ENCODE measurements at regions of chr17 and their contacts with region 1.

Region 1: GRCh38 chr17:3668279-3669085 is at the starts of genes EMC6 and TAX1BP3:
- DNase-seq: peak; percentile 97 to 100 (median 99)
- H3K4me3 ChIP-seq: peak within 1 kb of the TSS; percentile 76 to 83
- H3K4me3 Mint-ChIP-seq: peak within 1 kb of the TSS; percentile 88 to 96 (median 92)
- H3K27ac ChIP-seq: peak within 1 kb of the TSS; percentile 80
- H3K27ac Mint-ChIP-seq: peak within 1 kb of the TSS; percentile 84 to 95 (median 90)
- H3K4me1 ChIP-seq: peaks cover 23% of the 10 kb centered on the region
- H3K4me1 Mint-ChIP-seq: peaks cover 18 to 30% (median 19%) of the 10 kb centered on the region in 4 donors
- H3K27me3 ChIP-seq: no peaks in the 10 kb centered on the region
- H3K27me3 Mint-ChIP-seq: no peaks in the 10 kb centered on the region
- total RNA-seq, gene EMC6: 27.8 to 29.4 TPM
- total RNA-seq, gene TAX1BP3: 12.7 to 13.2 TPM

Region 2: DNA sequence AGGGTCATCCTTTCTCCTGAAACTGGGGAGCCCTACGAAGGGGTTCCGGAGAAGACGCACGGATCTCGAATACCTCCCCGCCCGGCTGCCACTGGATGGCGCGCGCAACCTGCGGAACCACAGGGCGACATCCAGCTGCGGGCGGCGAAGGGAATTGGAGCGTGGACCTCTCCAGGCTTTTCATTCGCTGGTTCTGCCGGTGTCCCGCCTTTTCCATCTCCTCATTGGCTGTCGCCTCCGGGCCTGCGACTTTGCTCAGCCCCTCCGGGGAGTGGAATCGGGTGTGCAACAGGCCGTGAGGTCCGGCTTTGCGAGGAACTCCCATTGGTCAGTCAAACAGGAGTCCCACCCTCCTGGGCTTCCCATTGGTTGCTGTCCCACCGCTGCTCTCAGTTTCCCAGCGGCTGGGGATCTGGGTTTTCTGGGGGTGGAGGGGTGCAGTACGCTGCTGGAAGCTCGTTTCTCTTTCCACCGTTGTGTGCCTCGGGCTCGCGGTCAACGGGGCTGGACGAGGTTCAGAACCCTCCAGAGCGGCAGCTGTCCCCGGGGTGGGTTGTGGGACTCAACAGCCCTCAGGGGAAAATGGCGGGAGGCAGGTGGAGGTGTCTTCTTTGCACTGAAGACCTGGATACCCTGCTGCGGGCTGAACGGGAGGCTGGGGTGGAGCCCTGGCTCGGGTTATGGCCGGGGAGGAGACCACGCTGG is 619.6 kb before region 1 on chr17:
- CTCF ChIA-PET with region 1: no interaction called
- POLR2A ChIA-PET with region 1: no interaction called
- intact Hi-C with region 1: loop called (anchors 5 kb)
- DNase-seq: peak; percentile 88 to 95 (median 93)
- H3K4me3 ChIP-seq: peak overlapping the region; percentile 66 to 94
- H3K4me3 Mint-ChIP-seq: peak overlapping the region; percentile 89 to 96 (median 94)
- H3K27ac ChIP-seq: peak overlapping the region; percentile 48
- H3K27ac Mint-ChIP-seq: peak overlapping the region; percentile 76 to 93 (median 91)
- H3K4me1 ChIP-seq: peaks cover 15% of the 10 kb centered on the region
- H3K4me1 Mint-ChIP-seq: peaks cover 0 to 14% (median 6%) of the 10 kb centered on the region in 4 donors
- H3K27me3 ChIP-seq: no peaks in the 10 kb centered on the region
- H3K27me3 Mint-ChIP-seq: no peaks in the 10 kb centered on the region

Region 3: DNA sequence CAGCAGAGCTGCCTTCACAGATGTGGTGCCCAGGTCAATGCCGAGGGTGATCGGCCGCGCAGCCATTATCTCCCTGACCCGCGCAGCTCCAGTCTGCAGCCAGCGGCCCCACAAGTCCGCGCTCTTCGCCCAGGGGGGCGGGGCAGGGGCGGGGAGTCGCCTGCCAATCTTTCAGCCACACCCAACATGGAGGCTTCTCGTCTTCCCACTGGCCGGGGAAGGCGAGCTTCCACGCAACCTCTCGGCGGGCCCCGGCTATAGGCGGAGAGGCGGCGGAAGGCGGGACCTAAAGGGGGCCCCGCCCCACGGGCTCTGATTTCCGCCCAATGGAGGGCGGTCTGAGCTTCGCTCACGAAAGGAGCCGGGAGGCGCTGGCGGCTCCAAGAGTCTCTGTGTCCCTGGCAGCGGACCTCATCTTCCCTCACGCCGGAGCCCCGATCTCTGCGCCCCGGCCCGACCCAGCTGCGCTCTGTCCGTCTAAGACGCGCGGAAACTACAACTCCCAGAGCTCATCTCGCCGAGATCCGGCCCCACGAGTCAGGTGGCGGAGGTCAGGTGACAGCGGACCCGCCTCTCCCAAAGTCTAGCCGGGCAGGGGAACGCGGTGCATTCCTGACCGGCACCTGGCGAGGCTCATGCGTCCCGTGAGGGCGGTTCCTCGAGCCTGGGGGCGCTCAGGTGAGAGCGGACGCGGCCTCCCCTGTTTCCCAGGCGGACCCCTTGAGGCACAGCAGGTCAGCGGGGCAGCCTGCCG is 32.2 kb before region 1 on chr17 and contains the starts of genes CTNS and SHPK:
- CTCF ChIA-PET with region 1: no interaction called
- POLR2A ChIA-PET with region 1: interaction called, 5 read pairs
- intact Hi-C with region 1: loop called (anchors 1 kb)
- DNase-seq: peak; percentile 93 to 97 (median 94)
- H3K4me3 ChIP-seq: peak within 1 kb of the TSS; percentile 73 to 99
- H3K4me3 Mint-ChIP-seq: peak within 1 kb of the TSS; percentile 96 to 100 (median 98)
- H3K27ac ChIP-seq: peak within 1 kb of the TSS; percentile 98
- H3K27ac Mint-ChIP-seq: peak within 1 kb of the TSS; percentile 97 to 100 (median 100)
- H3K4me1 ChIP-seq: peaks cover 11% of the 10 kb centered on the region
- H3K4me1 Mint-ChIP-seq: peaks cover 12 to 37% (median 24%) of the 10 kb centered on the region in 4 donors
- H3K27me3 ChIP-seq: no peaks in the 10 kb centered on the region
- H3K27me3 Mint-ChIP-seq: no peaks in the 10 kb centered on the region
- total RNA-seq, gene CTNS: 11.6 to 12.0 TPM
- total RNA-seq, gene SHPK: 10.7 to 11.6 TPM

Measured in CD4-positive, alpha-beta memory T cell (primary cell).